Heart left ventricle (tissue), 16 donors: ENCODE measurements at regions of chr12 and their contacts with region 1.

Region 1: GRCh38 chr12:108950991-108951739 is 69.7 kb downstream of the SVOP start:
- DNase-seq: peak; percentile 50 to 75 (median 67)
- ATAC-seq: peak; percentile 34 to 73 (median 68)
- H3K4me3 ChIP-seq: peak overlapping the region in 2 of 12 donors; percentile 9 to 21
- H3K27ac ChIP-seq: peak overlapping the region in 1 of 12 donors; percentile 36
- H3K4me1 ChIP-seq: peaks cover 0 to 18% (median 7%) of the 10 kb centered on the region in 12 donors
- H3K27me3 ChIP-seq: no peaks in the 10 kb centered on the region
- CTCF ChIP-seq: peak; percentile 75 to 97 (median 88)
- POLR2A ChIP-seq: no peak

Region 2: DNA sequence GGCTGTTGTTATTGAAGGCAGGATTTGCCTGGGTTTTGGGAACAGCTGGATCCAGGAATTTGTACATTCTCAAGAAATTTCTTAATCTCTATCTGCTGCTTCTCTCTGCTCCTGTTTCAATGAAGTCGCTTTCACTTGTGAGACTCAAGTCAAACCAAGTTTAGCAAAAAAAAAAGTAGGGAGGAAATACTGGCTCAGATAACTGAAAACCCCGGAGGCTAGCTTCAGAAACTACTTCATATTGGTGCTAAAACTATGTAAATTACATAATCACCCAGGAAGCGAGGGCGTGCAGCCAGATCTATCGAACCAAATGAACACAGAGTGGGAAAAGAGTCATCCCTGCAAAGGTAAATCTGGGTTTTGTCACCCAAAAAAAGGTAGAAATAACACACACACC is 504.4 kb before region 1 on chr12:
- intact Hi-C with region 1: no loop called
- DNase-seq: peak in 1 of 5 donors; percentile 40
- ATAC-seq: peak in 2 of 4 donors; percentile 13 to 61
- H3K4me3 ChIP-seq: no peak overlapping the region
- H3K27ac ChIP-seq: peak overlapping the region in 3 of 12 donors; percentile 30 to 57 (median 42)
- H3K4me1 ChIP-seq: peaks cover 0 to 18% (median 0%) of the 10 kb centered on the region in 12 donors
- H3K27me3 ChIP-seq: peaks cover 0 to 21% (median 3%) of the 10 kb centered on the region in 9 donors
- CTCF ChIP-seq: no peak
- POLR2A ChIP-seq: no peak

Region 3: GRCh38 chr12:108562348-108563135 is 388.6 kb before region 1 on chr12 and contains the start of gene ISCU:
- intact Hi-C with region 1: loop called in 7 of 10 experiments (anchors 2 to 10 kb)
- DNase-seq: peak; percentile 97 to 100 (median 98)
- ATAC-seq: peak; percentile 84 to 90 (median 88)
- H3K4me3 ChIP-seq: peak within 1 kb of the TSS; percentile 67 to 100 (median 89)
- H3K27ac ChIP-seq: peak within 1 kb of the TSS; percentile 84 to 98 (median 95)
- H3K4me1 ChIP-seq: peaks cover 7 to 81% (median 56%) of the 10 kb centered on the region in 12 donors
- H3K27me3 ChIP-seq: no peaks in the 10 kb centered on the region
- CTCF ChIP-seq: no peak
- POLR2A ChIP-seq: peak; percentile 86 to 98
- total RNA-seq, gene ISCU: 289 to 632 (median 497) TPM

Region 4: DNA sequence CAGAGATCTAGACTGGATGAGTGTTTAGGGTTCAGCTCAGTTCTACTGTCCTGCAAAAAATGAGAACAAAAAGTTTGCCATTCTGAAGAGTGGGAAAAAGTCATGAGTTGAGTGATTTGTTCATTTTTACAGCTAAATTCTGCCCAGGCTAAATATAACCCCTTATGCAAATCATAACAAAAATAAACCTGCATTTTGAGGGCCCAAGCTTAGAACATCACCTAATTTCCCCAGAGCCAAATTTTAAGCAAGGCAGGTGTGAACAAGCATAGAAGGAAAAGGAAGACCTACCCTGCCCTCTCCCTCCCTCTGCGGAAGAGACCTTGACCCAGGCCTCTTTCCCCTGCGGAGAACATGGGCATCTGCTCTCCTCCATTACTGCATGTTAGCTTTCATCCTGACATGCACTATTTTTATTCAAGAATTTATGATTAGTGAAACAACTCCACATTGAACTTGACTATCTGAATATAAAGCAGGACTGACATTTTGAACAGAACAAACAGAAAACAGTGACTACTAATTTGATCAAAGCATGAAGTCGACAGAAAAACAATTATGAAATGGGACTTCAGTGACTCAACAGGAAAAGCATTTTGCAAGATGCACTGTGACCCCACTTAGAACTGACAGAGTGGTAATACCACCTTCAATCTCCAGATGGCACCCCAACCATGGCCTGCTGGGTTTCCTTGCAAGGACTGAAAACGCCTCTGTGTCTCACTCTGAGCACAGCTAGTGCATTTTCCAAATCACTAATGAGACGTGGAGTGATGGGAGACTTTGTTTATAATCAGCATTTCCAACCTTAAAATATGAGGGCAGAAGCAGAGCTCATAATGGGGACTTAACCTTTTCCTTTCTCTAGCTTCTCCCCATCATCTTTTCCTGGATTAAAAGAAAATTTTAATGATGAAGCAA is 286.6 kb before region 1 on chr12:
- intact Hi-C with region 1: loop called in 9 of 10 experiments (anchors 1 to 10 kb)
- DNase-seq: peak; percentile 76 to 87 (median 84)
- ATAC-seq: peak; percentile 85 to 93 (median 92)
- H3K4me3 ChIP-seq: peak overlapping the region in 1 of 12 donors; percentile 12
- H3K27ac ChIP-seq: peak overlapping the region; percentile 62 to 88 (median 80)
- H3K4me1 ChIP-seq: peaks cover 17 to 60% (median 50%) of the 10 kb centered on the region in 12 donors
- H3K27me3 ChIP-seq: no peaks in the 10 kb centered on the region
- CTCF ChIP-seq: peak; percentile 88 to 98 (median 96)
- POLR2A ChIP-seq: peak in 1 of 2 donors; percentile 28

Region 5: DNA sequence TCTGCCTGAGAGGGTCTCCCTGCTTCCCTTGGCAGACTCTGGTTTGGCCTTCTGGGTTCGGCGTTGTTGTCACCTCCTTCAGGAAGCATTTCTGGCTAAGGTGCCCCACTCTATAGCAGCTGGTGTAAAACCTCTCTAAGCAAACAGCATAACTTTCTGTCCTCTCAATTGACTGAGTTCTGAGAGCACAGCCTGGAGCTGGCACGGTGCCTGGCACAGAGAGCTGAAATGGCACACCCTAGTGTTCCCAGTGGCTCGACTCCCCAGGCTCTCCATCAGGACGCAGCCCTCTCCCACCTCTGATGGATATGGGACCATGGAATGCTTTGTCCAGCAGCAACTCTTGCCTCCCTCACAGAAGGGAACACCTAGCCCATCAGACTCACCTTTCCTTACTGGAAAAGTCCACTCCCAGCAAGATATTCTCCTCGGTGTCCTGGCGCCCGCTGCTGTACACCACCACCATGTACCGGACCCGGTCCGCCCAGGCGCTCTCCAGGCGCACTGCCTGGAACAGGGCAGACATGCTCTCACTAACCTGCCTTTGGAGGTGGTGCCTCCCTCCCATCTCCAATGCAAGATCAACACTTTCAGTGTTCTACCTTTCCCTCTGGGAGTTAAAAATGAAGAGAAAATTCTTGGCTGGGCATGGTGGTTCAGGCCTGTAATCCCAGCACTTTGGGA is 134.4 kb before region 1 on chr12:
- intact Hi-C with region 1: loop called in 1 of 10 experiments (anchors 5 kb)
- DNase-seq: peak in 2 of 5 donors; percentile 70 to 78
- ATAC-seq: peak; percentile 45 to 71 (median 56)
- H3K4me3 ChIP-seq: no peak overlapping the region
- H3K27ac ChIP-seq: peak overlapping the region in 8 of 12 donors; percentile 33 to 62 (median 48)
- H3K4me1 ChIP-seq: peaks cover 5 to 79% (median 66%) of the 10 kb centered on the region in 12 donors
- H3K27me3 ChIP-seq: no peaks in the 10 kb centered on the region
- CTCF ChIP-seq: peak in 2 of 12 donors; percentile 6 to 14
- POLR2A ChIP-seq: no peak

Region 6: GRCh38 chr12:108861878-108862587 is 89.1 kb before region 1 on chr12:
- intact Hi-C with region 1: loop called in 3 of 10 experiments (anchors 5 to 10 kb)
- DNase-seq: peak in 3 of 5 donors; percentile 61 to 68 (median 66)
- ATAC-seq: peak in 1 of 4 donors; percentile 38
- H3K4me3 ChIP-seq: no peak overlapping the region
- H3K27ac ChIP-seq: peak overlapping the region in 3 of 12 donors; percentile 31 to 69 (median 43)
- H3K4me1 ChIP-seq: peaks cover 0 to 42% (median 12%) of the 10 kb centered on the region in 12 donors
- H3K27me3 ChIP-seq: no peaks in the 10 kb centered on the region
- CTCF ChIP-seq: no peak
- POLR2A ChIP-seq: no peak

Region 7: DNA sequence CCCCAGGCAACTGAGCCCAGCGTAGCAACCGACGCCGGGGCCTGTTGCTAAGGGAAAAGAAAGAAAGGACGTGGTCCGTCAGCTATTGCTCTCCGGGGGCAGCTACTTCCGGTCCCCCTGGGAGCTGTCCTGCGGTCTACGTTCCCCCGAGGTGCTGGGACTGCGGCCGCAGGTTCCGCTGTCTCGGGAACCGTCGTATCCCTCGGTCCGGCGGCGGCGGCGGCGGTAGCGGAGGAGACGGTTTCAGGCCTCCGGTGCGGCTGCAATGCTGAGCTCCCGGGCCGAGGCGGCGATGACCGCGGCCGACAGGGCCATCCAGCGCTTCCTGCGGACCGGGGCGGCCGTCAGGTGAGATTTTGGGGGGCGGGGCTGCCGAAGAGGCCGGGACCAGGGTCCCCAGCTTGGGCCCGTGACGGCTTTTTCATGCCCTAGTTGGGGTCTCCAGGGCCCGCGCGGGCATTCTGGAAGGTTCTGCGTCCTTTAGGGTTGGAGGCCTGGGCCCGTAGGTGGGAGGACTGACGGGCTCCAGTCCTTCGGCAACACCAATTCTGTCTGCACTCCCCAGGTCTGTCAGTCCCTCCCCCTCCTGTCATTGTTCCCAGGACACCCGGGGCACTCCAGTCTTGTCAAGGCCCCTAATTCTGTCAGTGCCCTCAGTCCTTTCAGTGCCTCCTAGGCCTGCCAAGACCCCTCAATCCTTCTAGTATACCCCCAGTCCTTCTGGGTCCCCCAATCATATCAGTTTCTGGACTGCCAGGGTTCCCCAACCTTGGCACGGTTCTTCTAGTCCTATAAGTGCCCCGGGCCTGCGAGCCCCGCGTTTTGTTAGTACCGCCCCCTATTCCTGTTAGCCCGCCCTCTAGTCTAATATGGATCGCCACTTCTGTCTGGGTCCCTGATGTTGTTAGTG is 101.5 kb after region 1 on chr12 and contains the start of gene USP30:
- intact Hi-C with region 1: loop called in 1 of 10 experiments (anchors 5 kb)
- DNase-seq: peak; percentile 84 to 92 (median 86)
- ATAC-seq: peak; percentile 91 to 98 (median 96)
- H3K4me3 ChIP-seq: peak within 1 kb of the TSS; percentile 60 to 97 (median 92)
- H3K27ac ChIP-seq: peak within 1 kb of the TSS; percentile 67 to 93 (median 90)
- H3K4me1 ChIP-seq: peaks cover 0 to 25% (median 17%) of the 10 kb centered on the region in 12 donors
- H3K27me3 ChIP-seq: no peaks in the 10 kb centered on the region
- CTCF ChIP-seq: no peak
- POLR2A ChIP-seq: no peak
- total RNA-seq, gene USP30: 9.8 to 29.9 (median 16.7) TPM

Region 8: GRCh38 chr12:109518820-109519665 is 567.9 kb after region 1 on chr12:
- intact Hi-C with region 1: loop called in 1 of 10 experiments (anchors 10 kb)
- DNase-seq: peak in 4 of 5 donors; percentile 60 to 71 (median 66)
- ATAC-seq: peak; percentile 27 to 69 (median 40)
- H3K4me3 ChIP-seq: no peak overlapping the region
- H3K27ac ChIP-seq: peak overlapping the region; percentile 35 to 89 (median 75)
- H3K4me1 ChIP-seq: peaks cover 14 to 57% (median 26%) of the 10 kb centered on the region in 12 donors
- H3K27me3 ChIP-seq: no peaks in the 10 kb centered on the region
- CTCF ChIP-seq: peak; percentile 74 to 95 (median 86)
- POLR2A ChIP-seq: no peak